ENCODE measurements at regions of chr2 and their contacts with region 1.

Region 1: GRCh38 chr2:201795607-201796477 is 10.5 kb upstream of the CDK15 start:
- DNase-seq: peak; percentile 71
- ATAC-seq: peak; percentile 51
- H3K4me3 ChIP-seq: no peak overlapping the region
- H3K27ac ChIP-seq: no peak overlapping the region
- H3K4me1 ChIP-seq: peaks cover 10% of the 10 kb centered on the region
- H3K27me3 ChIP-seq: no peaks in the 10 kb centered on the region
- CTCF ChIP-seq: peak; percentile 86
- POLR2A ChIP-seq: no peak
- RAD21 ChIP-seq: peak; percentile 92

Region 2: DNA sequence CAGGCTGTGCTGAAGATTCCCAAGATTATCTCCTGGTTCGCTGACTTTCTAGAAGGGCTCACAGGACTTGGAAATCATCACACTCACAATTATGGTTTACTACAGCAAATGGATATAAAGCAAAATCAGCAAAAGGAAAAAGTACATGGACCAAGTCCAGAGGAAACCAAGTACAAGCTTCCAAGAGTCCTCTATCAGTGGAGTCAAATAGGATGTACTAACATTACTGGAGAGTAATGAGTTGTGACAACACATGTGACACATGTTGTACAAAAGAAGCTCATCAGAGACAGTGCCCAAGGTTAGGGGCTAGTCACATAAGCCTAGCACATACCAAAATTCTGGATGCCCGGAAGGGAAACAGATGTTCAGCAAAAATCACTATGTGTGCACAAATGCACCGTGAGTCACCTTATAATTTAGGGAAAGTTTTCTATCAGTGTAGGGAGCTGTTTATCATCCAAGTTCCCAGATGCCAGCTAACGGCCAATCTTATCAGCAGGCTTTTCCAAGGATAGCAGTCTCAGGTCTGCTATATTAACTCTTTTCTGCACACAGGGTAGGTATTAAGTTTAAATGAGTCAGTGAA is 162.1 kb before region 1 on chr2:
- CTCF ChIA-PET with region 1: no interaction called
- POLR2A ChIA-PET with region 1: no interaction called
- dilution Hi-C with region 1: no loop called
- in situ Hi-C with region 1: no loop called
- intact Hi-C with region 1: no loop called
- DNase-seq: peak; percentile 28
- ATAC-seq: peak; percentile 21; the same call in 1 of the 2 replicates
- H3K4me3 ChIP-seq: no peak overlapping the region
- H3K27ac ChIP-seq: no peak overlapping the region
- H3K4me1 ChIP-seq: no peaks in the 10 kb centered on the region
- H3K27me3 ChIP-seq: no peaks in the 10 kb centered on the region
- CTCF ChIP-seq: no peak
- POLR2A ChIP-seq: no peak
- RAD21 ChIP-seq: no peak

Region 3: GRCh38 chr2:201758234-201758633 is 37.6 kb before region 1 on chr2:
- CTCF ChIA-PET with region 1: no interaction called
- POLR2A ChIA-PET with region 1: no interaction called
- dilution Hi-C with region 1: no loop called
- in situ Hi-C with region 1: no loop called
- intact Hi-C with region 1: no loop called
- DNase-seq: no peak
- ATAC-seq: no peak
- H3K4me3 ChIP-seq: no peak overlapping the region
- H3K27ac ChIP-seq: no peak overlapping the region
- H3K4me1 ChIP-seq: peaks cover 6% of the 10 kb centered on the region; the same call in 1 of the 2 replicates
- H3K27me3 ChIP-seq: no peaks in the 10 kb centered on the region
- CTCF ChIP-seq: no peak
- POLR2A ChIP-seq: no peak
- RAD21 ChIP-seq: no peak

Region 4: GRCh38 chr2:201860636-201861066 is 64.8 kb after region 1 on chr2:
- CTCF ChIA-PET with region 1: interaction called, 11 read pairs
- POLR2A ChIA-PET with region 1: no interaction called
- dilution Hi-C with region 1: no loop called
- in situ Hi-C with region 1: loop called (anchors 5 kb)
- intact Hi-C with region 1: loop called (anchors 1 kb)
- DNase-seq: peak; percentile 93
- ATAC-seq: peak; percentile 83
- H3K4me3 ChIP-seq: no peak overlapping the region
- H3K27ac ChIP-seq: peak overlapping the region; percentile 68; the same call in 1 of the 2 replicates
- H3K4me1 ChIP-seq: peaks cover 26% of the 10 kb centered on the region
- H3K27me3 ChIP-seq: no peaks in the 10 kb centered on the region
- CTCF ChIP-seq: peak; percentile 80
- POLR2A ChIP-seq: 0 out of 2 replicates have a peak, but pooled peaks have one; percentile 43
- RAD21 ChIP-seq: peak; percentile 98

Region 5: DNA sequence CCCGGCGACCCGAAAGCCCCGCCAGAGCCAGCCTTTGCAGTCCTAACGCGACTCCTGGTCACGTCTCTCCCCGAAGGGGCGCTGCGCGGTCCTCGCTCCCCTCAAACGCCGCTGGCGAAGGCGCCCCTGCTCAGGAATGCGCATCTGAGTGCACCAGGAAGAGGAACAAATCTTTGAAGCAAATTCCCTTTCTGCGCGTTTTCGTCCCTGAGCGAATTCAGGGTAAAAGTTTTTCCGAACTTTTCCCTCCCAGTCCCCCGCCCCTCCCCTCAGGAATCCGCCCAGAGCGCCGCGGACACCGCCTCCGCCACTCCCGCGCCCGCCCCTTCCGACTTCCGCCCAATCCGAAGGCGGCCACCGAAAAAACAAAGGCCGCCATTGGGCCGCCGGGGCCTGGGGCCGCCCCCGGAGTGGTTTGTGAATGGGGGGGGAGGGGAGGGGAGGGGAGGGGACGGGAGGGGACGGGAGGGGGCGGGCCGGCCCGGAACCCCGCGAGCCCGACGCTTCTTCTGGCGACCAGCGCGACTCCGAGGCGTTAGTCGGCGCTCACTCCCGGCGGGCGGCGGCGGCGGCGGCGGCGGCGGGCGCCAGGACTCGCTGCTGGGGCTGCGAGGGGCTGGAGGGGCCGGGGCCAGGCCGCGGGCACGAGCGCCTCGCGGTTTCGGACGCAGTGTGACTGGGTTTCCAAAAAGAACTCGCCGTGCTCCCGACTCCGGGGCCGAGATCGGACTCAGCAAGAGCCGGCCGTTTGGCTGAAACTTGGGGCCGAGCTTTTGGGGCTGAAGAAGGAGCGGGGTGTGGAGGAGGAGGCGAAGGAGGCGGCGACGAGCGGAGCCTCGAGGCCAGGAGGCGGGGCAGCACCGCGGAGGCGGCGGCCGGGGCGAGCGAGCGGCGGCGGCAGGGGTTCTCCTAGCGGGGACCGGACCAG is 237.7 kb after region 1 on chr2 and contains the start of gene FZD7:
- CTCF ChIA-PET with region 1: no interaction called
- POLR2A ChIA-PET with region 1: no interaction called
- dilution Hi-C with region 1: no loop called
- in situ Hi-C with region 1: loop called (anchors 5 kb)
- intact Hi-C with region 1: loop called (anchors 1 kb)
- DNase-seq: peak; percentile 92
- ATAC-seq: peak; percentile 73
- H3K4me3 ChIP-seq: peak within 1 kb of the TSS; percentile 94
- H3K27ac ChIP-seq: peak within 1 kb of the TSS; percentile 98
- H3K4me1 ChIP-seq: peaks cover 6% of the 10 kb centered on the region
- H3K27me3 ChIP-seq: no peaks in the 10 kb centered on the region
- CTCF ChIP-seq: 0 out of 2 replicates have a peak, but pooled peaks have one; percentile 0
- POLR2A ChIP-seq: peak; percentile 73
- RAD21 ChIP-seq: peak; percentile 24
- total RNA-seq, gene FZD7: 62.4 and 81.1 TPM in 2 replicates

Region 6: GRCh38 chr2:202178342-202178958 is 382.6 kb after region 1 on chr2:
- CTCF ChIA-PET with region 1: no interaction called
- POLR2A ChIA-PET with region 1: no interaction called
- dilution Hi-C with region 1: no loop called
- in situ Hi-C with region 1: loop called (anchors 5 kb)
- intact Hi-C with region 1: loop called (anchors 1 kb)
- DNase-seq: peak; percentile 79
- ATAC-seq: peak; percentile 94
- H3K4me3 ChIP-seq: no peak overlapping the region
- H3K27ac ChIP-seq: no peak overlapping the region
- H3K4me1 ChIP-seq: peaks cover 2% of the 10 kb centered on the region; the same call in 1 of the 2 replicates
- H3K27me3 ChIP-seq: no peaks in the 10 kb centered on the region
- CTCF ChIP-seq: peak; percentile 89
- POLR2A ChIP-seq: peak; percentile 44; the same call in 1 of the 2 replicates
- RAD21 ChIP-seq: peak; percentile 94

Region 7: DNA sequence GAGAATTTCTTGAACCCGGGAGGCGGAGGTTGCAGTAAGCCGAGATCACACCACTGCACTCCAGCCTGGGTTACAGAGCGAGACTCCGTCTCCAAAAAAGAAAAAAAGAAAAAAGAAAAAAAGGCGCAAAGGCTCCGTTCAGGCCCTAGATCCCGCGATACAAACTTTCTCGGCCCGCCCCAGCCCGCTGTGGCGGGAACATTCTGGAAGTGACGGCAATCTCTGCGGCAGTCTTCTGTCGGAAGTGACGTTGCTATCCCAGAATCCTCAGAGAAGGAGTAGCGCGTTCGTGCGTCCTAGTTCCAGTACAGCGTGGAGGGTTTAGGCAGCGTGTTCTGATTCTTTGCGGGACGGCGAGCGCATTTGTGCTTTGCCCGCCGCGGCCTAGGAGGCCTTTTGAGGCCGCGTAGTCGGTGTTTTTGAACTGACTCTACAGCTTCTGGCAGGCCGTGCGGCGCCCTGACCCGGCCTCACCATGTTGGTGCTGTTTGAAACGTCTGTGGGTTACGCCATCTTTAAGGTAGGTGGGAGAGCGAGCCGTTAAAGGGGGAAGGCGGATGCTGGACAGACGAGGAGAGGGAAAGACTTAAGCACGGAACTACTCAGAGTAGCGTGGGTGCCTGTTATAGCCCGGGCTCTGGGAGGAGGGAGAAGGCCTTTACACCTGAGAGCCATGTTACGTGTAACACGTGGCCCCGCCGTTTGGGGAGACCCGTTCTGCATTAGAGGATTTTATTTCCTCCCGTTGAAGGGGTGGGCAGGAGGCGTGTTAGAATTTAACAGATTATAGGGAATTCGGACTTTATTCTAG is 469.8 kb after region 1 on chr2 and contains the start of gene NOP58:
- CTCF ChIA-PET with region 1: no interaction called
- POLR2A ChIA-PET with region 1: no interaction called
- dilution Hi-C with region 1: no loop called
- in situ Hi-C with region 1: no loop called
- intact Hi-C with region 1: loop called (anchors 5 kb)
- DNase-seq: peak; percentile 96
- ATAC-seq: peak; percentile 87
- H3K4me3 ChIP-seq: peak within 1 kb of the TSS; percentile 93
- H3K27ac ChIP-seq: peak within 1 kb of the TSS; percentile 89
- H3K4me1 ChIP-seq: peaks cover 2% of the 10 kb centered on the region
- H3K27me3 ChIP-seq: no peaks in the 10 kb centered on the region
- CTCF ChIP-seq: no peak
- POLR2A ChIP-seq: peak; percentile 98
- RAD21 ChIP-seq: no peak
- total RNA-seq, gene NOP58: 45.3 and 117 TPM in 2 replicates